ENCODE measurements at regions of chr12 and their contacts with region 1.

Region 1: DNA sequence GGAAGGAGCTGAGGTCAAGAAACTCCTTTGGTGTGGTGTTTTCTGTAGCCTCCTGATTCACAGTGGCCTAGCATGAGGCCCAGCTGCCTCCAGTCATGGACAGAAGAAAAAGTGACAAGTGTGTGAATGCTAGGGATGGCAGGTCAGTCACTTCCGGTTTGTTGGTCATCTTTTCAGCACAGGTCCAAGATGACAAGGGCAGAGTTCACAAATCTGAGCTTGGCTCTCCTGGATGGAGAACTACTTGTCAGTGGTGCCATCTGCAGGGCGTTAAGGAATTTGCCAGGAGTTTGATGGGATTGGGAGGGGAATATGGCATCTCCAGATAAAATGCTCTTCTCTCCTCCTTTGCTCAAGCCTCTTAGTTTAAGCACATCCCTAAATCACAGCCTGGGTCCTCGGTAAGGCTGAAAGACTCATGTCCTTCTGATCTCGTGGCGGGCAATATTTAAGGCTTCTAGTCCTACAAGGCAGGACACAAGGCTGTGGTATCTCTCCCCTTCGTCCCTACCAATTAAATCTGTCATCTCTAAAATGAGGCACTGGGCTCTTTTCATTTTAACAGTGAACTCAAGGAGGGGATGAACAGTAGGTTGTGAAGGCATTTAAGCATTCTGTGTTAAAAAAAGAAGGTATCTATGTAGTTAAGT is 10.0 kb downstream of the TUBA1B start:
- DNase-seq: no peak
- H3K4me3 ChIP-seq: no peak overlapping the region
- CTCF ChIP-seq: peak; percentile 65

Region 2: GRCh38 chr12:48995061-48995879 is 125.9 kb before region 1 on chr12:
- CTCF ChIA-PET with region 1: interaction called, 15 read pairs
- POLR2A ChIA-PET with region 1: no interaction called
- DNase-seq: no peak
- H3K4me3 ChIP-seq: peak overlapping the region; percentile 25
- CTCF ChIP-seq: peak; percentile 83

Region 3: GRCh38 chr12:49033611-49034316 is 87.4 kb before region 1 on chr12:
- CTCF ChIA-PET with region 1: no interaction called
- POLR2A ChIA-PET with region 1: no interaction called
- DNase-seq: no peak
- H3K4me3 ChIP-seq: no peak overlapping the region
- CTCF ChIP-seq: no peak

Region 4: GRCh38 chr12:49055981-49056754 is 65.0 kb before region 1 on chr12:
- CTCF ChIA-PET with region 1: interaction called, 14 read pairs
- POLR2A ChIA-PET with region 1: no interaction called
- DNase-seq: peak; percentile 12
- H3K4me3 ChIP-seq: peak overlapping the region; percentile 84
- CTCF ChIP-seq: no peak

Region 5: GRCh38 chr12:49098035-49098451 is 23.1 kb before region 1 on chr12:
- CTCF ChIA-PET with region 1: interaction called, 42 read pairs
- POLR2A ChIA-PET with region 1: no interaction called
- DNase-seq: no peak
- H3K4me3 ChIP-seq: no peak overlapping the region
- CTCF ChIP-seq: peak; percentile 69

Region 6: DNA sequence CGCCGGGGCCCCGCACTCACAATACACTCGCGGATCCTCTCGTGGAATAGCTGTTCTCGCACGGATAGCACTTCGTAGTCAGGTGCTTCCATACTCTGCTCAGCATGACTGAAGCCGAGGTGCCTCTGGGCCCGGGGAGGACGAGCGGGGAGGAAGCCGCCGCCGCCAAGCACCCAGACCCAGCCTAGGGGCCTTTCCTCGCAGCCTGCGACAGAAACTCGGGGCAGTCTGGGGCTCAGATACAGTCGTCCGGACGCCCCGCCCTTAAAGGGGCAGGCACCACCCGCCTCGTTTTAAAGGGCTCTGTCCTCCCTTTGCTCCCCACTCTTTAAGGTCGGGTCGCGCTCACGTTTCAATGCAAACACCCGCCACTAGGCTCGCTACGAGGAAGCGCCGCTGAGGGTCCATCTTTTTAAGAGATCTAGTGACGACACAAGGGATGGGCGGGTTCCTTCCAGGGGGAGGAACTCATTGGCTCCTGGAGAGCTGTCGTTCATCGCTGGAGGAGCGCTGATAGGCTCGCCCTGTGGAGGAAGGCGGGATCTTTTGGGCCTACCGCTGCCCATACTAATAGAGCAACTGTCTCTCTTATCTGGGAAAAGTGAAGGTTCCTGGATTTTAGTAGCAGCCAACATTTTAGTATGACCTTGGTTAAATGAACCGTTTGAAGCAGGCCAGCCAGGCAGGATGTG is 10.6 kb before region 1 on chr12 and contains the start of gene LMBR1L:
- CTCF ChIA-PET with region 1: interaction called, 110 read pairs
- POLR2A ChIA-PET with region 1: interaction called, 3 read pairs
- DNase-seq: peak; percentile 88
- H3K4me3 ChIP-seq: peak within 1 kb of the TSS; percentile 87
- CTCF ChIP-seq: peak; percentile 62

Measured in AG04449 (cell line).